Activated naive CD4-positive, alpha-beta T cell treated with anti-CD3 and anti-CD28 coated beads for 36 hours (primary cell): ENCODE measurements at regions of chr3 and their contacts with region 1.

Region 1: GRCh38 chr3:105222568-105223093 is 144.1 kb upstream of the ALCAM start:
- DNase-seq: no peak
- H3K4me3 Mint-ChIP-seq: no peak overlapping the region
- H3K27ac Mint-ChIP-seq: no peak overlapping the region
- H3K4me1 Mint-ChIP-seq: no peaks in the 10 kb centered on the region
- H3K27me3 Mint-ChIP-seq: no peaks in the 10 kb centered on the region

Region 2: GRCh38 chr3:105174017-105174615 is 48.5 kb before region 1 on chr3:
- CTCF ChIA-PET with region 1: no interaction called
- intact Hi-C with region 1: loop called (anchors 1 kb)
- DNase-seq: no peak
- H3K4me3 Mint-ChIP-seq: no peak overlapping the region
- H3K27ac Mint-ChIP-seq: no peak overlapping the region
- H3K4me1 Mint-ChIP-seq: no peaks in the 10 kb centered on the region
- H3K27me3 Mint-ChIP-seq: peaks cover 2% of the 10 kb centered on the region

Region 3: GRCh38 chr3:105195260-105195659 is 27.4 kb before region 1 on chr3:
- CTCF ChIA-PET with region 1: no interaction called
- intact Hi-C with region 1: no loop called
- DNase-seq: no peak
- H3K4me3 Mint-ChIP-seq: no peak overlapping the region
- H3K27ac Mint-ChIP-seq: no peak overlapping the region
- H3K4me1 Mint-ChIP-seq: no peaks in the 10 kb centered on the region
- H3K27me3 Mint-ChIP-seq: no peaks in the 10 kb centered on the region

Region 4: DNA sequence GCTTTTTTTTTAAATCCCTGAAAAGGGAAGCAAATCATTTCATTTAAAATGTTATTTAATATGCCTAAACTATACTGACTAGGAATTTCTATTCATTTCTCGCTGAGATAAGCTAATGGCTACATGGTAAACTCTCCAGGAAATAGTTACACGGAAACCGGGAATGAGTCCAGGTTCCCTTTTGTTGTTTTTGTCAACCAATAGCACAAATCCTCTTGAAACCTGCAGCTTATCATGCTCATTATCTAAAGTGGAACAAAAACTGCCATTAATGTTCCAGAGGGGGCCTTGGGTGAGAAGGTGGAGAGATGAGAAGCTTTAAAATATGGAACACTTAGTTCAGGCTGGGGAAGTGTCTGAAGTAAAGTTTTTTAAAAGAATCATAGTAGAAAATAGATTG is 30.6 kb after region 1 on chr3:
- CTCF ChIA-PET with region 1: no interaction called
- intact Hi-C with region 1: no loop called
- DNase-seq: no peak
- H3K4me3 Mint-ChIP-seq: no peak overlapping the region
- H3K27ac Mint-ChIP-seq: no peak overlapping the region
- H3K4me1 Mint-ChIP-seq: no peaks in the 10 kb centered on the region
- H3K27me3 Mint-ChIP-seq: no peaks in the 10 kb centered on the region